ENCODE measurements at regions of chr21 and their contacts with region 1.

Region 1: DNA sequence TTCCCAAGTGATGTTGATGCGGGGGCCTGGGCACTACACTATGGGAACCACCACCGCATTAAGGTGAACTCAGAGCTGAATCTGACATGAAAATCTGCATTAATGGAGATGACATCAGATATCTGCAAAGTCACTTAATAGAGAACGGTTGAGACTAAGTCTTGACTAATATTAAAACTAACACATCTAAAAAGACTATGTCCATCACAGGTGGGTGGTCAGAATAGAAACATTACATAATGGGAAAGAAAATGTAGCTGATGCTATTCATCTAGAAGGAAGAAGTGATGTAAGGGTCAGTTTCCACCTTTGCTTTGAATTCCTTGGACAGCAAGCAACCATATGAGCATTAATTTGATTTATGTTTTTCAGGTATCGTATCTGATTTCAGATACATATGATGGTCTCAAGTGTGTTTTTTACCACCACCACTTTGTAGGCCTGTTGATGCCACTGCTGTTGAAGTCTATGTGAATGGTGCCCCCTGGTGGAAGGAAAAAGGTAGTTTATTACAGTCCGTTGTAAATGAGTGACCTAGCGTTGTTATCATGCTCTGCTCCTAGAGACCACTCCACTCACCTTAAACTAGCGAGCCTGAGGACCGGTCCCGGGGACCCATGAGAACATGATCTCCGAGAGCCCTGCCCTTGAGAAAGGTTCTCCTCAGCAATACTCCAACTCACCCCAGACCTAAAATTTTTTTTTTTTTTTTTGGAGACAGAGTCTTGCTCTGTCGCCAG is 73.5 kb downstream of the BACH1 start:
- DNase-seq: no peak
- ATAC-seq: peak; percentile 83
- H3K4me3 Mint-ChIP-seq: no peak overlapping the region
- H3K27ac Mint-ChIP-seq: peak overlapping the region; percentile 46
- H3K4me1 Mint-ChIP-seq: peaks cover 13% of the 10 kb centered on the region
- H3K27me3 Mint-ChIP-seq: no peaks in the 10 kb centered on the region
- CTCF ChIP-seq: peak; percentile 66

Region 2: GRCh38 chr21:29091032-29091431 is 281.2 kb before region 1 on chr21:
- CTCF ChIA-PET with region 1: interaction called, 91 read pairs
- POLR2A ChIA-PET with region 1: interaction called, 4 read pairs
- intact Hi-C with region 1: loop called (anchors 1 kb)
- DNase-seq: no peak
- ATAC-seq: no peak
- H3K4me3 Mint-ChIP-seq: no peak overlapping the region
- H3K27ac Mint-ChIP-seq: no peak overlapping the region
- H3K4me1 Mint-ChIP-seq: no peaks in the 10 kb centered on the region
- H3K27me3 Mint-ChIP-seq: no peaks in the 10 kb centered on the region
- CTCF ChIP-seq: no peak

Region 3: DNA sequence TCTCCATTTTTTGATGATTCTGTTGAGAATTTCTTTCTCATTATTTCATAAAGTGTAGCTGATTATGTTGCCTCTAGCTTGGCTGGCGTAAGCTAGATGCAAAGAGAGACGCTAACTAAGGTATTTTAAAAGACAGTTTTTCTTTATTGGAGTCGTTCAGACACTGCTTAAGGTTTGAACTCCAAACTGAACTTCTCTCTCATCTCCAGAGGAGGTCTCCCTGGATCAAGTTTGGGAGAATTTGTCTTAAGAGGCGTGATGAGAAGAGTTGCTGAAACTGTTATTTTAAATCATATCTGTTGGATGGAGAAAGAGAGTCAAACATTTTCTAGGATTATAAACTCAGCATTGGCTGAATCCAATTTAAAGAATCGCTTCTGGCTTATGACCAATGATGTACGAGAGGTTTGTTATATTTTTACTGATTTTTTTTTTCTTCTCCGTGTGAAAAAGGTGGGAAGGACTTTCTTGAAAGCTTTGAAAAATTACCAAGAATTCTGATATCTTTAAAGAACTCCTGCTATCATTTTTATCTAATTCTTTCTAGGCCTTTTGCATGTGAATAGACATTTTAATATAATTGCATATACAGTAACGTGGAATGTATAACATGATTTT is 207.8 kb before region 1 on chr21:
- CTCF ChIA-PET with region 1: interaction called, 15 read pairs
- POLR2A ChIA-PET with region 1: no interaction called
- intact Hi-C with region 1: loop called (anchors 1 kb)
- DNase-seq: no peak
- ATAC-seq: peak; percentile 57
- H3K4me3 Mint-ChIP-seq: no peak overlapping the region
- H3K27ac Mint-ChIP-seq: no peak overlapping the region
- H3K4me1 Mint-ChIP-seq: peaks cover 7% of the 10 kb centered on the region
- H3K27me3 Mint-ChIP-seq: no peaks in the 10 kb centered on the region
- CTCF ChIP-seq: no peak

Region 4: DNA sequence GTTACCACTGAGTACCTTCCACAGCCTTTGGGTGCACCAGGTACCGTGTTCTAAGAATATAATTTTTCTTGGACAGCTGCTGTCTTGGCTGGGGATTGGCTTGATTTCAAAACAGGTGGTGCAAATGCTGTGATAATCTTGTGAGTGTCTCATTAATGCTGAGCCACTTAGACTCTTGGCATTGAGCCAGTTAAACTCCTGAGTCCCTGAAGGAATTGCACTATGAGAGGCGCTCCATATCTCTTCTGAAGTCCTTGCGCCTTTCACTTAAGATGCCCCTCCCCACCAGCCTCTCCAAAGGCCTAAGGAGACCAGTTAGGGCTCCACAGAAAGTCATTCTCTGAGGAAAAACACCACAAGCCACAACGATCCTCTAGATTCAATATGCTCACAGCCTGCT is 22.5 kb before region 1 on chr21:
- CTCF ChIA-PET with region 1: interaction called, 6 read pairs
- POLR2A ChIA-PET with region 1: no interaction called
- intact Hi-C with region 1: loop called (anchors 2 kb)
- DNase-seq: no peak
- ATAC-seq: no peak
- H3K4me3 Mint-ChIP-seq: no peak overlapping the region
- H3K27ac Mint-ChIP-seq: peak overlapping the region; percentile 33
- H3K4me1 Mint-ChIP-seq: peaks cover 26% of the 10 kb centered on the region
- H3K27me3 Mint-ChIP-seq: no peaks in the 10 kb centered on the region
- CTCF ChIP-seq: no peak

Region 5: DNA sequence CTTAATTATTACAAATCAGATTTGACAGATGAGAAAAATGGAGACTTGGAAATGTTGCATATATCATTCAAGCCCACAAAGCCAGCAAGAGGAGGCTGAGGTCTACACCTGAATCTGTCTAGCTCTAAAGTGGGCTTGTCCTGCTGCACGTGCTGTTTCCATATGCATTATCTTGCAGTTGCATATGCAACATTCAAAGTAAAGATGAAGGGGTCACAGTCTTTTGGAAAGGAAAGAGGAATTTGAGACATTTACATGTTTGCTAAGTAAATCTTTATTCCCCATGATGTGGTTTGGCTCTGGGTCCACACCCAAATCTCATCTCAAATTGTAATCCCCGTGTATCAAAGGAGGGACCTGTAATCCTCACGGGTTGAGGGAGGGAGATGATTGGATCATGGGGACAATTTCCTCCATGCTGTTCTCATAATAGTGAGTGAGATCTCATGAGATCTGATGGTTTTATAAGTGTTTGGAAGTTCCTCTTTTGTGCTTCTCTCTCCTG is 24.8 kb after region 1 on chr21:
- CTCF ChIA-PET with region 1: no interaction called
- POLR2A ChIA-PET with region 1: no interaction called
- intact Hi-C with region 1: no loop called
- DNase-seq: no peak
- ATAC-seq: no peak
- H3K4me3 Mint-ChIP-seq: no peak overlapping the region
- H3K27ac Mint-ChIP-seq: no peak overlapping the region
- H3K4me1 Mint-ChIP-seq: no peaks in the 10 kb centered on the region
- H3K27me3 Mint-ChIP-seq: no peaks in the 10 kb centered on the region
- CTCF ChIP-seq: no peak

Region 6: GRCh38 chr21:31088315-31088714 is 1716.1 kb after region 1 on chr21:
- CTCF ChIA-PET with region 1: no interaction called
- POLR2A ChIA-PET with region 1: no interaction called
- intact Hi-C with region 1: loop called (anchors 5 kb)
- DNase-seq: no peak
- ATAC-seq: no peak
- H3K4me3 Mint-ChIP-seq: no peak overlapping the region
- H3K27ac Mint-ChIP-seq: no peak overlapping the region
- H3K4me1 Mint-ChIP-seq: peaks cover 2% of the 10 kb centered on the region
- H3K27me3 Mint-ChIP-seq: peaks cover under 1% of the 10 kb centered on the region
- CTCF ChIP-seq: no peak

Measured in activated B cell treated with CpG ODN at 0.5 μM for 24 hours (primary cell).